ENCODE measurements at regions of chr15 and their contacts with region 1.

Region 1: GRCh38 chr15:90697181-90697580 is 20.0 kb upstream of the BLM start:
- DNase-seq: no peak
- H3K4me3 ChIP-seq: no peak overlapping the region
- H3K27ac ChIP-seq: no peak overlapping the region
- H3K4me1 ChIP-seq: peaks cover 0 to 11% of the 10 kb centered on the region in 2 donors
- H3K27me3 ChIP-seq: no peaks in the 10 kb centered on the region
- CTCF ChIP-seq: no peak
- POLR2A ChIP-seq: no peak

Region 2: DNA sequence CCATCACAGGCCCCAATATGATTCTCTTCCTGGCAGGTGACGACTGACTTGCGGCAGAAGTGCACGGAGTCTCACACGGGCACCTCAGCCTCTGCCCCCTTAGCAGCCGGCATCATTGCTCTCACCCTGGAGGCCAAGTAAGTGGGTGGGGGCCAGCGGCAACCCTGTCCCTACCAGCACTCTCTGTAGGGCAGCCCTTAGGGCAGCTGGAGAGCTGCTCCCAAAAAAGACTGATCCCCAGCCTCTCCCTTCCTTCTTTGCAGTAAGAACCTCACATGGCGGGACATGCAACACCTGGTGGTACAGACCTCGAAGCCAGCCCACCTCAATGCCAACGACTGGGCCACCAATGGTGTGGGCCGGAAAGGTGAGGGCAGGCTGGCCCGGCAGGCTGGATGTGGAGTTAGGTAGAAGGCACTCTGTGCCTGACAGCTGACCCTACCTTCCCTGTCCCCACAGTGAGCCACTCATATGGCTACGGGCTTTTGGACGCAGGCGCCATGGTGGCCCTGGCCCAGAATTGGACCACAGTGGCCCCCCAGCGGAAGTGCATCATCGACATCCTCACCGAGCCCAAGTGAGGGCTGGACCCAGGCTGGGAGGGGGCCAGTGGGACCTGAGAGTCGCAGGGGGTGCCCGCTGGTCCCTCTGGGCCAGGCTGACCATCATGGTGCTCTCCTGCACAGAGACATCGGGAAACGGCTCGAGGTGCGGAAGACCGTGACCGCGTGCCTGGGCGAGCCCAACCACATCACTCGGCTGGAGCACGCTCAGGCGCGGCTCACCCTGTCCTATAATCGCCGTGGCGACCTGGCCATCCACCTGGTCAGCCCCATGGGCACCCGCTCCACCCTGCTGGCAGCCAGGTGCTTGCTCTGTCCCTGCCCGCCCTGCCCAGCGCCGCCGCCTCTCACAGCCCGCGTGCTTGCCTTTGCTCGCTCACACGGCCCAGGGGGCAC is 182.5 kb after region 1 on chr15:
- intact Hi-C with region 1: loop called (anchors 5 kb)
- DNase-seq: no peak
- H3K4me3 ChIP-seq: no peak overlapping the region
- H3K27ac ChIP-seq: no peak overlapping the region
- H3K4me1 ChIP-seq: peaks cover 14 to 24% of the 10 kb centered on the region in 2 donors
- H3K27me3 ChIP-seq: no peaks in the 10 kb centered on the region
- CTCF ChIP-seq: no peak
- POLR2A ChIP-seq: no peak